ENCODE measurements at regions of chr5 and their contacts with region 1.

Region 1: DNA sequence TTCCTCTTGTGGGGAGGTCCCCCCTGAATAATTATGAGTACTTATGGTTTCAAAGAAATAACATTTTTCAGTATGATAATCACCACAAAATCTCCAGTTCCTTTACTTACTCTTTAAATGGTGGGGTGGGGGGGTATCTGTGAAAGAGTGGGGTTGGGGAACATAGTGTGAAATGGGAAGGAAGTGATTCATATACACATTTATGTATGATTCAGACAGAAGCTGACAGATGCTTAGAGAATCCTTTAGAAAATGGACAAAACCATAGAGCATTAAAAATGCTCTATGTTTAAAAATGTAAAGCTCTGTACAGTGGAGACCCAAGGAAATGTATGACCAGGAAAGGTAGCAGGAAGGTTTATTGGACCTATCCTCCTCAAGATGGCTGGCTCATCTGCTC is 267.5 kb upstream of the GRIA1 start:
- DNase-seq: peak; percentile 58
- H3K4me3 Mint-ChIP-seq: no peak overlapping the region
- H3K27ac Mint-ChIP-seq: peak overlapping the region; percentile 63
- H3K4me1 Mint-ChIP-seq: peaks cover 17% of the 10 kb centered on the region
- H3K27me3 Mint-ChIP-seq: no peaks in the 10 kb centered on the region
- CTCF ChIP-seq: no peak

Region 2: GRCh38 chr5:152907488-152908245 is 315.3 kb before region 1 on chr5:
- CTCF ChIA-PET with region 1: no interaction called
- POLR2A ChIA-PET with region 1: no interaction called
- intact Hi-C with region 1: no loop called
- DNase-seq: no peak
- H3K4me3 Mint-ChIP-seq: no peak overlapping the region
- H3K27ac Mint-ChIP-seq: no peak overlapping the region
- H3K4me1 Mint-ChIP-seq: no peaks in the 10 kb centered on the region
- H3K27me3 Mint-ChIP-seq: no peaks in the 10 kb centered on the region
- CTCF ChIP-seq: no peak

Region 3: DNA sequence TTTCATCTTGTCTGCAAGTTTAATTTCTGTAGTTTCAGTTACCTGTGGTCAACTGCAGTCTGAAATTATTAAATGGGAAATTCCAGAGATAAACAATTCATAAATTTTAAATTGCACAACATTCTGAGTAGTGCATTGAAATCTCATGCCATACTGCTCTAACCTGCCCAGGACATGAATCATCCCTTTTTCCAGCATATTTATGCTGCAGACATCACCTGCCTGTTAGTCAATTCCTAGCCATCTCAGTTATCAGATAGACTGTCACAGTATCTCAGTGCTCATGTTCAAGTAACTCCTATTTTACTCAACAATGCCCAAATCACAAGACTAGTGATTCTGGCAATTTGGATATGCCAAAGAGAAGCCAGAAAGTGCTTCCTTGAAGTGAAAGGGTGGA is 44.6 kb after region 1 on chr5:
- CTCF ChIA-PET with region 1: no interaction called
- POLR2A ChIA-PET with region 1: no interaction called
- intact Hi-C with region 1: loop called (anchors 5 kb)
- DNase-seq: peak; percentile 71
- H3K4me3 Mint-ChIP-seq: no peak overlapping the region
- H3K27ac Mint-ChIP-seq: peak overlapping the region; percentile 50
- H3K4me1 Mint-ChIP-seq: peaks cover 17% of the 10 kb centered on the region
- H3K27me3 Mint-ChIP-seq: no peaks in the 10 kb centered on the region
- CTCF ChIP-seq: no peak

Region 4: GRCh38 chr5:153480401-153480800 is 257.5 kb after region 1 on chr5:
- CTCF ChIA-PET with region 1: interaction called, 5 read pairs
- POLR2A ChIA-PET with region 1: no interaction called
- intact Hi-C with region 1: loop called (anchors 2 kb)
- DNase-seq: peak; percentile 65
- H3K4me3 Mint-ChIP-seq: no peak overlapping the region
- H3K27ac Mint-ChIP-seq: no peak overlapping the region
- H3K4me1 Mint-ChIP-seq: peaks cover 25% of the 10 kb centered on the region
- H3K27me3 Mint-ChIP-seq: no peaks in the 10 kb centered on the region
- CTCF ChIP-seq: no peak

Measured in MCF 10A (cell line).